Upper lobe of right lung (tissue), 1 donor: ENCODE measurements at regions of chr9 and their contacts with region 1.

Region 1: GRCh38 chr9:130682490-130683121 is 11.0 kb upstream of the EXOSC2 start:
- DNase-seq: peak; percentile 90
- ATAC-seq: peak; percentile 87
- H3K4me3 ChIP-seq: peak overlapping the region; percentile 58
- H3K27ac ChIP-seq: no peak overlapping the region
- H3K4me1 ChIP-seq: peaks cover 11% of the 10 kb centered on the region
- H3K27me3 ChIP-seq: peaks cover 6% of the 10 kb centered on the region
- CTCF ChIP-seq: peak; percentile 84

Region 2: DNA sequence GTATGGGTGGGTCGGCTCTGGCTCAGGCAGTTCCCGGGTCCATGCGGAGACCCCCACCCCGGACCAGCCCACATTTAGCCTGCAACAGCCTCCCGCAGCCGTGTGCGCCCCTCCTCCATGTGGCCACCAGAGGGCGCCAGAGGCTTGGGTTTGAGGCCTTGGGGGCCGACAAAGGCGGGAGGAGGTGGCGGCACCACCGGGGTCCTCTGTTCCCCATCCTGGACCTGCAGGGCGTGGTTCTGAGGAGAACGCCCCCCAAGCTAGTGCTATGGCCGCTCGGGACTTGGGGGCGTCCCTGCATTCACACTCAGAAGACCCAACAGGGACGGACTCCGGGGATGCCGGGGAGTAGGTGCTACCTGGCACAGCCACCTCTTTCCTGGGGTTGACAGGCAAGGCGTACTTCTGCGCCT is 221.4 kb before region 1 on chr9:
- intact Hi-C with region 1: loop called (anchors 5 kb)
- DNase-seq: peak; percentile 80
- ATAC-seq: peak; percentile 79
- H3K4me3 ChIP-seq: no peak overlapping the region
- H3K27ac ChIP-seq: no peak overlapping the region
- H3K4me1 ChIP-seq: no peaks in the 10 kb centered on the region
- H3K27me3 ChIP-seq: no peaks in the 10 kb centered on the region
- CTCF ChIP-seq: peak; percentile 94

Region 3: DNA sequence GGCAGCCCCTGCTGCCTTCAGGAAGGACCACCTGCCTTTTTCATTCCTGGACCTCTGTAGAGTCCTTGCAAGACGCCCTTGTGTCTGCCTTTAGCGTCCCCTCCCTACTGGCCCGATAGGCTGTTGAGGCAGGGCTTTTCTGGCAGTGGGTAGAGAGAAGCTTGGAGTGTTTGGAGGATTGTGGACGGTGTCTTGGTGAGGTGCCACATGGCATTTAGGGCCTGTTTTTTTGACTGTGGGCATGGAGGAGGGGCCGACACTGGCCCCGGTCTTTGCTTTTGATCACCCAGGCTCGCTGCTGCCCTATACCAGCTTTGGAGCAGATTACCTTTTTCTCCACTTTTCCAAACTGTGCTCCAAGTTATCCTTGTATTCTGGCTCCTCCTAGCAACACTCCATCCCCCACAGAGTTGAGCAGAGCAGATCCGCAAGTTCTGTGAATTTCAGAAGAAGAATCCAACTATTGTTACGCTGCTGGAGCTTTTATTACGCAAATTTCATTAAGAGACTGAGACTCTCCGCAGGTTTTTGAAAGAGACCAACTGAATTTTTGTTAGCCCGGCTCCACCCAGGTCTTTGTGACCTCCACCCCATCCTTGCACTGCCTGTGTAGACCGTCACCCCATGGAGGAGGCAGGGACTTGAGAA is 53.0 kb before region 1 on chr9:
- intact Hi-C with region 1: no loop called
- DNase-seq: no peak
- ATAC-seq: no peak
- H3K4me3 ChIP-seq: no peak overlapping the region
- H3K27ac ChIP-seq: no peak overlapping the region
- H3K4me1 ChIP-seq: no peaks in the 10 kb centered on the region
- H3K27me3 ChIP-seq: no peaks in the 10 kb centered on the region
- CTCF ChIP-seq: no peak

Region 4: DNA sequence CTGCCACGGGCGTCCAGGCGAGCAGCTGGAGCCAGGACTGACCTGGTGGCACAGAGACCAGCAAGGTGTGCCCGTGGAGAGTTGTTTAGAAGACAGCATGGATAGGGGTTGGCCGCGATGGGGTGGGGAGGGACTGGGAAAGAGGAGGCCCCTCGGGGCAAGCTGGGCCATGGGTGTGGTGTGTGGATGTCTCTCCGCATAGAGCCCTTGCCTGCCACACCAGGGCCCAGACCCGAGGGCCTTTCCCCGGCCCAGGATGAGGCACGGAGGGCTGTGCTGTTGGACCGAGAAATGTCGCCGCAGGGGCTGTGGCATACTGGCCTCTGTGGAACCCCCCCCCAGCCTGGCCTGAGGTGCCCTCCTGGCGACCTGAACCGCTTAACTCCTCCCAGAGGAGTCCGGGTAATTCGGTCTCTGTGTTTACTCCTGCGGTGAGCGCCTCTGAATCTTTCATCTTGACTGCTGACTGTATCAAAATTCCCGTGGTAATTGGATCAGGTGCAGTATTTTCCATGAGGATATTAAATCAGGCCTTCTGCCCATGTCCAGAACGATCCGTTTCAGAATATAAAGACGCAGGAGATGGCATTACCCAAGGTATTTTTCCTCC is 303.9 kb after region 1 on chr9:
- intact Hi-C with region 1: no loop called
- DNase-seq: no peak
- ATAC-seq: no peak
- H3K4me3 ChIP-seq: no peak overlapping the region
- H3K27ac ChIP-seq: no peak overlapping the region
- H3K4me1 ChIP-seq: no peaks in the 10 kb centered on the region
- H3K27me3 ChIP-seq: no peaks in the 10 kb centered on the region
- CTCF ChIP-seq: no peak